GM18951 (cell line): ENCODE measurements at regions of chr9 and their contacts with region 1.

Region 1: GRCh38 chr9:124270504-124271335 is 13.0 kb downstream of the NEK6 start:
- POLR2A ChIP-seq: no peak

Region 2: GRCh38 chr9:124133727-124134126 is 137.0 kb before region 1 on chr9:
- in situ Hi-C with region 1: loop called (anchors 10 kb)
- POLR2A ChIP-seq: no peak